GM12878 (cell line): ENCODE measurements at regions of chr12 and their contacts with region 1.

Region 1: GRCh38 chr12:120132863-120133385 is 16.4 kb upstream of the RAB35 start:
- DNase-seq: peak; percentile 92
- ATAC-seq: peak; percentile 95
- H3K4me3 ChIP-seq: peak overlapping the region; percentile 42; the same call in 1 of the 2 replicates
- H3K27ac ChIP-seq: peak overlapping the region; percentile 84
- H3K4me1 ChIP-seq: peaks cover 31% of the 10 kb centered on the region
- H3K27me3 ChIP-seq: no peaks in the 10 kb centered on the region
- CTCF ChIP-seq: no peak
- EP300 ChIP-seq: peak; percentile 51 to 58; a peak in 2 of 4 replicates
- POLR2A ChIP-seq: peak; percentile 78
- RAD21 ChIP-seq: no peak

Region 2: DNA sequence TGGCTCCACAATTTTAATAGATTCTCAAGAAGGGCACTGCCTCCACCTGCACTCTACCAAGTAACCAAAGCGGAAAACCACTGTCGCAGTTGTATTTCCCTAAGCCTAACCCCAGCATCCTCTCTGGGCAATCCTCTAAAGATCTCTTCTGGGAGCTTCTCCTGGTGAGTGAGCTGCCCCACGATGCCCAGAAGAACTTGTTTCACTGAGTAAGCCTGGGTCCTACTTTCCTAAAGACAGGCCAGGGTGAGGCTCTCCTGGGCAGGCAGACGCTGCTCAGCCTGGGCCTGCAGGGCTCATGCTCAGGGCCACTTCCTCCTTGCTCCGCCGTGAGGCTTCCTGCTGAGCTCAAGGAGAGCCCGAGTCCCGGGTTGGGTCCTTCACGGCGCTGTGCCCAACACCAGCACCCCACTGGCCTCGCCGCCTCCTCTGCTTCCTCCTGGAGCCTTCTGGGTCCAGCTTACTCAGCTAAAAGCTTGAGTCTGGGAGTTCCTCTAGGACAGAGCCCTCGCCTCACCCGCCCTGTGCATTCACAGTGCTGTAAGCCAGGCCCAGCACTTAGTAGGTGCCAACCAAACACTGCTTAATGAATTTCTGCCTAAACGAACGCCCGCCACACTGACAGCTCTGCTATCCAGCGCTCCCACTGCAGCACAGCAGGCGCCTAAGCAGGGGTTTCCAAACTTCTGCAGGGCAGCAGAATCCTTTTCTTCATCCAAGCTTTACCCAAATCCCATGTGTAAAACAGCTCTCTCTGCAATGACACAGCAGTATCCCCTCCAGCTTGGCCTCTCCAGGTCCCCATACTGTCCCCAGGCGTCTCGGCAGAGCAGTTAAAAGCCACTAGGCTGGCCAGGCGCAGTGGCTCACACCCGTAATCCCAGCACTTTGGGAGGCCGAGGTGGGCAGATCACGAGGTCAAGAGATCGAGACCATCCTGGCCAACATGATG is 22.1 kb before region 1 on chr12:
- CTCF ChIA-PET with region 1: interaction called, 18 read pairs
- POLR2A ChIA-PET with region 1: interaction called, 141 read pairs
- RAD21 ChIA-PET with region 1: interaction called, 118 read pairs
- SMC1A ChIA-PET with region 1: interaction called, 142 read pairs
- in situ Hi-C with region 1: no loop called
- intact Hi-C with region 1: no loop called
- DNase-seq: no peak
- ATAC-seq: peak; percentile 92
- H3K4me3 ChIP-seq: peak overlapping the region; percentile 62
- H3K27ac ChIP-seq: peak overlapping the region; percentile 56
- H3K4me1 ChIP-seq: peaks cover 49% of the 10 kb centered on the region
- H3K27me3 ChIP-seq: no peaks in the 10 kb centered on the region
- CTCF ChIP-seq: 0 out of 6 replicates have a peak, but pooled peaks have one; percentile 4 to 12 (median 8)
- EP300 ChIP-seq: no peak
- POLR2A ChIP-seq: peak; percentile 3
- RAD21 ChIP-seq: 0 out of 2 replicates have a peak, but pooled peaks have one; percentile 10